ENCODE measurements at regions of chr1 and their contacts with region 1.

Region 1: DNA sequence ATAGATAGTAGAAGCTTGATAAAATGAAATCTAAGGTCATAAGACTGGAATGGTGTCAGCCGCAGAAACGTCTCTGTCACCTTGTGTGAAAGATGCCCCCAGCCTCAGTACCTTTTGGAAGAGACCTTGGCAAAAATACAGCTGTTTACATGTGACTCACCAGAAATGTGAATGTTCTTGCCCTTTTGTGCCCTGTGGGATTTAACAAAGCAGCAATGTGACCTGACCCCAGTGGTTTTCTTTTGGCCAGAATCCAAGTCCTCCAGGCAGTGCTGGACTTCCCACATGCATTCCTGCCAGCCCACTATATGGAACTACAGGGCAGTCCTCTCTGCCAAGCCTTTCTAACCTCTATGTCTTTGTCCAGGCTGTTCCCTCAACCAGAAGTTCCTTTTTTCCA is 27.2 kb upstream of the LRRC8C start:
- DNase-seq: no peak
- ATAC-seq: no peak
- H3K4me3 Mint-ChIP-seq: peak overlapping the region; percentile 62
- H3K27ac Mint-ChIP-seq: peak overlapping the region; percentile 99
- H3K4me1 Mint-ChIP-seq: peaks cover 92% of the 10 kb centered on the region
- H3K27me3 Mint-ChIP-seq: no peaks in the 10 kb centered on the region

Region 2: DNA sequence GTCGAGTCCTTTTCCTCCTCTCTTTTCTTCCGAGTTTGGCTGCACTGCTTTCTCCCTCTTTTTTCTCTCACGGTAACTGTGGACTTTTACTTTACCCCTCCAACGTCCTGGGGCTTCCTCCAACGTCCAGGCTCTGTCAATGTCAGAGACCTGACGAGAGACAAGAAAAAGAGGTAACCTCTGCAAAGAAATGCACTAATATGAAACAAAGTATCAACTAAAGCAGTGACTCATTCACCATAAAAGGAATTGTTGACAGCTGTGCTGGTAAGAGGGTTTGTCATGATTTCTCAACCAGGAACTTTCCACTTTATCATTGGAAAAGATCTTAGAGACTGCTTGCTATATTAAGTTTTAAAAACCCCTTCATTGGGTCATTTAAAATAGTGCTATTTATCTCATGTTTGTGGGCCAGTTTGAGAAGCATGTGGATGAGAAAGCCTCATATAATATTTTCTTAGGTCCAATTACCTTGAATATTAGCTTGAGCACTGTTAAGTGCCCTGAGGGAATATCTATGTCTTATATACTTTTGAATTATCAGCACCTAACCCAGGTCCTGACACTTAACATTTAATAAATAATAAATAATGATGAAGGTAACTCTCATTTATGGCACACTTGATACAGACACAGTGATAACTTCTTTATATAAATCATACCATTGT is 479.6 kb before region 1 on chr1 and contains the start of gene GBP2:
- CTCF ChIA-PET with region 1: no interaction called
- POLR2A ChIA-PET with region 1: interaction called, 7 read pairs
- intact Hi-C with region 1: loop called in 1 of 2 experiments (anchors 2 kb)
- DNase-seq: peak; percentile 50
- ATAC-seq: peak; percentile 77
- H3K4me3 Mint-ChIP-seq: peak within 1 kb of the TSS; percentile 87
- H3K27ac Mint-ChIP-seq: peak within 1 kb of the TSS; percentile 99
- H3K4me1 Mint-ChIP-seq: peaks cover 52% of the 10 kb centered on the region
- H3K27me3 Mint-ChIP-seq: no peaks in the 10 kb centered on the region
- total RNA-seq, gene GBP2: 253 to 294 TPM

Region 3: GRCh38 chr1:89524369-89525168 is 81.1 kb before region 1 on chr1 and contains the start of gene LRRC8B:
- CTCF ChIA-PET with region 1: interaction called, 3 read pairs
- POLR2A ChIA-PET with region 1: interaction called, 10 read pairs
- intact Hi-C with region 1: loop called (anchors 1 to 5 kb)
- DNase-seq: peak; percentile 94
- ATAC-seq: peak; percentile 71
- H3K4me3 Mint-ChIP-seq: no peak within 1 kb of the TSS
- H3K27ac Mint-ChIP-seq: no peak within 1 kb of the TSS
- H3K4me1 Mint-ChIP-seq: peaks cover 24% of the 10 kb centered on the region
- H3K27me3 Mint-ChIP-seq: no peaks in the 10 kb centered on the region
- total RNA-seq, gene LRRC8B: 38.9 to 41.5 TPM

Region 4: DNA sequence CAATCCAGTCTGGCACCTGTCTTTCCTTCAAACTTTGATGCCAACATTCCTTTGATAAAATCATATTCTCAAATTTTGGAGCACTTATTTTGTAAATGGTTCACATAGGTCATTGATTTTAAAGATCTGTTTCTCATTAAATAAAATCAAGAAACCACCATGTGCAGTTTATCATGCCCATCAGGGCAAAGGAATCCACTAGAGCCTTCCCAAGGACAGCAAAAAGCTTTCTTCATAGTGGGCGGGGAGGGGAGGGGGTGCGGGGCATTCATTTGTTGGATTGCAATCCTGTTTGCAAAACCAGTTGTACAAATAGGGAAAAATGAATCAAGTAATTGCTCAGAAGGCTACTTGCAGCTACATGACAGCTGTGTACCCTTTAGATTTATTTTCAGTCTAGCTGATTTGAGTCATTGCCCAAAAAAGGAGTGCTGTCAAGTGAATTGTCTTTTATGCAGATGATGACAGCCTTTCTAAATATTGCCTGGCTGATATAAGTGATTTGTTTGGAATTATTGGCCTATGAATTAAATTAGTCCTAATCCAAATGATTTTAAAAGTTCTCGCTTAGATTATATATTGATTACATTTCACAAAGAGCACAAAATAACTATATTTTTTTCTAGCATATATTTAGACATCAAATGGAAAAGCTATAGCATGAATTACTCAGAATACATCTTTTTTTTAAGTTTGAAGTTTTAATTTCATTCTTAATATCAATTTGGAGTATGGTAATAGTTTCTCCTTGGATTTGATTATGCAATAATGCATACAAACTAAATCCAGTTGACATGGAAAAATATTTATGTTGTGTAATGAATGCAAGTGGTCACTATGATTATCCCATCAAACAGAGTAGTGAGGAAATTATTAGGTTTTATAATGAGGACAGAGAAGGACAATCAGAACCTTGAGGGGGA is 57.9 kb before region 1 on chr1:
- CTCF ChIA-PET with region 1: interaction called, 7 read pairs
- POLR2A ChIA-PET with region 1: interaction called, 12 read pairs
- intact Hi-C with region 1: loop called (anchors 1 kb)
- DNase-seq: peak; percentile 70
- ATAC-seq: peak; percentile 48
- H3K4me3 Mint-ChIP-seq: peak overlapping the region; percentile 20
- H3K27ac Mint-ChIP-seq: peak overlapping the region; percentile 95
- H3K4me1 Mint-ChIP-seq: peaks cover 86% of the 10 kb centered on the region
- H3K27me3 Mint-ChIP-seq: no peaks in the 10 kb centered on the region

Region 5: DNA sequence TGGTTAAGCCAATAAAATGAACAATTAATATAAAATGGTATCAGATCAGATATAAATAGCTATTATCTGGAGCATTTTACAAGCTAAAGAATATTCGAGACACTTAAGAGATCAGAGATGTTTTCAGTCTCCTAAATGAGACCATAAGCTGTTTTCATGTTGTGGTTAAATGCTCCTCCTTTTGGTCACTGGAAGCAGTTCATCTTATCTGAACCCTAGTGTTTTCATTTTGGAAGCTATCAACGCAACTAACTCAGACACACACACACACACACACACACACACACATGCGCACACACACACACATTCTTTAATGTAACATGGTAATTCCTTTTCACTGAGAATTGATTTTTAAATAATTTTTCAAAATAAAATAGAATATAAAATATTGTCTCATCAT is 17.2 kb after region 1 on chr1:
- CTCF ChIA-PET with region 1: interaction called, 27 read pairs
- POLR2A ChIA-PET with region 1: interaction called, 22 read pairs
- intact Hi-C with region 1: no loop called
- DNase-seq: no peak
- ATAC-seq: no peak
- H3K4me3 Mint-ChIP-seq: no peak overlapping the region
- H3K27ac Mint-ChIP-seq: no peak overlapping the region
- H3K4me1 Mint-ChIP-seq: peaks cover 63% of the 10 kb centered on the region
- H3K27me3 Mint-ChIP-seq: no peaks in the 10 kb centered on the region

Region 6: GRCh38 chr1:89994805-89995597 is 389.3 kb after region 1 on chr1 and contains the start of gene ZNF326:
- CTCF ChIA-PET with region 1: no interaction called
- POLR2A ChIA-PET with region 1: no interaction called
- intact Hi-C with region 1: loop called (anchors 5 to 10 kb)
- DNase-seq: peak; percentile 97
- ATAC-seq: peak; percentile 95
- H3K4me3 Mint-ChIP-seq: peak within 1 kb of the TSS; percentile 94
- H3K27ac Mint-ChIP-seq: peak within 1 kb of the TSS; percentile 92
- H3K4me1 Mint-ChIP-seq: peaks cover 42% of the 10 kb centered on the region
- H3K27me3 Mint-ChIP-seq: no peaks in the 10 kb centered on the region
- total RNA-seq, gene ZNF326: 19.4 to 20.5 TPM